ENCODE measurements at regions of chr20 and their contacts with region 1.

Region 1: GRCh38 chr20:38406476-38406875 is 28.7 kb downstream of the SNHG17 start:
- DNase-seq: no peak
- H3K4me3 Mint-ChIP-seq: no peak overlapping the region
- H3K27ac Mint-ChIP-seq: no peak overlapping the region
- H3K4me1 Mint-ChIP-seq: no peaks in the 10 kb centered on the region
- H3K27me3 Mint-ChIP-seq: no peaks in the 10 kb centered on the region
- CTCF ChIP-seq: no peak

Region 2: GRCh38 chr20:37990571-37991151 is 415.8 kb before region 1 on chr20:
- CTCF ChIA-PET with region 1: no interaction called
- POLR2A ChIA-PET with region 1: no interaction called
- intact Hi-C with region 1: no loop called
- DNase-seq: peak; percentile 50
- H3K4me3 Mint-ChIP-seq: peak overlapping the region; percentile 40
- H3K27ac Mint-ChIP-seq: peak overlapping the region; percentile 83
- H3K4me1 Mint-ChIP-seq: peaks cover 76% of the 10 kb centered on the region
- H3K27me3 Mint-ChIP-seq: no peaks in the 10 kb centered on the region
- CTCF ChIP-seq: no peak

Region 3: GRCh38 chr20:38337561-38338140 is 68.8 kb before region 1 on chr20:
- CTCF ChIA-PET with region 1: interaction called, 14 read pairs
- POLR2A ChIA-PET with region 1: interaction called, 5 read pairs
- intact Hi-C with region 1: loop called (anchors 1 kb)
- DNase-seq: peak; percentile 27
- H3K4me3 Mint-ChIP-seq: no peak overlapping the region
- H3K27ac Mint-ChIP-seq: no peak overlapping the region
- H3K4me1 Mint-ChIP-seq: no peaks in the 10 kb centered on the region
- H3K27me3 Mint-ChIP-seq: peaks cover 36% of the 10 kb centered on the region
- CTCF ChIP-seq: peak; percentile 34

Region 4: DNA sequence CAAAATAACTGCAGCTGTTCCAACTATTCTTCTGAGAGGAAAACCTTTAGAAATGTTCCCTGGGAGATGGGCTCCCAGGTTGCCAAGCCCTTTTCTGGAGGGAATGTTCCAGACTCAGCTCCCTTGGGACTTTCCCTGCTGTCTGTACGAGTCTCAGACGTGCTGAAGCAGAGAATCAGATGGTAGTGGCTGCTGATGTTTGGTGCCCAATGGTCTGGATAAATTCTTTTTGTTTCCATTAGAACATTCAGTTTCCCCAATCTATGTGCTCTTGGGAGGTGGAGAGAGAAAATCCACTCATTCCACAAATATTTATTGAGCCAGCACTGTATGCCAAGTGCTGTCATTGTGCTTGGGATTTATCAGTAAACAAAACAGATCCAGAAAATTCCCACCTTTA is 11.3 kb before region 1 on chr20:
- CTCF ChIA-PET with region 1: interaction called, 25 read pairs
- POLR2A ChIA-PET with region 1: no interaction called
- intact Hi-C with region 1: no loop called
- DNase-seq: no peak
- H3K4me3 Mint-ChIP-seq: no peak overlapping the region
- H3K27ac Mint-ChIP-seq: no peak overlapping the region
- H3K4me1 Mint-ChIP-seq: no peaks in the 10 kb centered on the region
- H3K27me3 Mint-ChIP-seq: no peaks in the 10 kb centered on the region
- CTCF ChIP-seq: no peak

Region 5: GRCh38 chr20:38426006-38426405 is 19.5 kb after region 1 on chr20:
- CTCF ChIA-PET with region 1: interaction called, 12 read pairs
- POLR2A ChIA-PET with region 1: no interaction called
- intact Hi-C with region 1: no loop called
- DNase-seq: peak; percentile 89
- H3K4me3 Mint-ChIP-seq: no peak overlapping the region
- H3K27ac Mint-ChIP-seq: no peak overlapping the region
- H3K4me1 Mint-ChIP-seq: peaks cover 26% of the 10 kb centered on the region
- H3K27me3 Mint-ChIP-seq: no peaks in the 10 kb centered on the region
- CTCF ChIP-seq: no peak

Region 6: DNA sequence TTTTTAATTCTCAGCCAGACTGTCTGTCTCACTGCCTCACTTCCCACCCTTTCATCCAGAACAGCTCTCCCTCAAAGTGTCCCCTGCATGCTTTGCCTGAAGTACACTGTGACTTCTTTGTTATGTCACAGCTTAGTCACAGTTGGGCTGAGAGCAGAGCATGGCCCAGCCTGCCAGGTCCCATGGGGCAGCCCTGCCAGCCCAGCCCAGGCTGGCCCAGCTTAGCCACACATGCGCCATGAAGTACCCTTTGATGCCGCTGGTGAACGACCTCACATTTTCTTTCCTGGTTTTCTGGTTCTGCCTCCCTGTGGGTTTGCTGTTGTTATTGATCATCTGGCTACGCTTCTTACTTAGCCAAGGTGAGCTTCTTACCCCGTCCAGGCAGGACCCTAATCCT is 174.5 kb after region 1 on chr20 and contains the start of gene ADIG:
- CTCF ChIA-PET with region 1: no interaction called
- POLR2A ChIA-PET with region 1: no interaction called
- intact Hi-C with region 1: no loop called
- DNase-seq: no peak
- H3K4me3 Mint-ChIP-seq: no peak within 1 kb of the TSS
- H3K27ac Mint-ChIP-seq: peak within 1 kb of the TSS; percentile 57
- H3K4me1 Mint-ChIP-seq: peaks cover 5% of the 10 kb centered on the region
- H3K27me3 Mint-ChIP-seq: no peaks in the 10 kb centered on the region
- CTCF ChIP-seq: no peak
- total RNA-seq, gene ADIG: not detected in 2 replicates